Mammary epithelial cell (primary cell): ENCODE measurements at regions of chr19 and their contacts with region 1.

Region 1: DNA sequence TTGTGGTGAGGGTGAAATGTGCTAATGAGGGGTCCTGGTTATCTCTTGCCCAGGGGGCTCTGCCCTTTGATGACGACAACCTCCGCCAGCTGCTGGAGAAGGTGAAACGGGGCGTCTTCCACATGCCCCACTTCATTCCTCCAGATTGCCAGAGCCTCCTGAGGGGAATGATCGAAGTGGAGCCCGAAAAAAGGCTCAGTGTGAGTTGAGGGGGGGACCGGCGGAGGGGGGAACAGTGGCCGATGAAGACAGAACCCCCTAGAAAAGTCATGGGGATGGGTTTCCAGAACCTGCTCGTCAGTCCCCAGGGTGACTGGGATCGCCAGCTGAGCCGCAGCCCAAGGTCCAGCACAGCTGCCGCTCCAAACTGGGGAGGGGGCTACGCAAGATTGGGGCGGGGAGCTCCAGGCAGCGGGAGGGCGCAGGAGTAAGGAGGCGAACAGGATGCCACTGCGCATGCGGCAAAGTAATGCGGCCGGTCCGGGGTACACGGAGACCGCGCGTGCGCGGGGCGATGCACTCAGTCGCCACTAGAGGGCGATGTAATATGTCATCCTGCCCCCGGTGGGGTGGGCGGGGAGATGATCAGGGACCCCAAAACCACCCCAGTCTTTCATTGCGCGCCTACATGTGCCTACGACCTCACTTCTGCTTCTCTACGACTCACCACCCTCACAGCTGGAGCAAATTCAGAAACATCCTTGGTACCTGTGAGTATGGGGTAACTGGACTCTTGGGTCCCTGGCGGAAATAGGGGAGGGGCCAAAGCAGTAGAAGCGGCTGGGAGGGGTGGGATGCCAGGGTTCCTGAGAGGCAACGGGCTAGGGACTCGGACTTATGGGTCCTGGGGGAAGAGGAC is 17.9 kb downstream of the BRSK1 start:
- DNase-seq: peak; percentile 52
- H3K4me3 ChIP-seq: peak overlapping the region; percentile 17 to 50 (median 29)
- H3K27ac ChIP-seq: no peak overlapping the region
- H3K4me1 ChIP-seq: no peaks in the 10 kb centered on the region
- H3K27me3 ChIP-seq: no peaks in the 10 kb centered on the region
- CTCF ChIP-seq: peak; percentile 73 to 94

Region 2: GRCh38 chr19:55223291-55224037 is 78.2 kb before region 1 on chr19:
- CTCF ChIA-PET with region 1: no interaction called
- dilution Hi-C with region 1: loop called (anchors 5 kb)
- in situ Hi-C with region 1: no loop called
- intact Hi-C with region 1: no loop called
- DNase-seq: no peak
- H3K4me3 ChIP-seq: no peak overlapping the region
- H3K27ac ChIP-seq: no peak overlapping the region
- H3K4me1 ChIP-seq: no peaks in the 10 kb centered on the region
- H3K27me3 ChIP-seq: no peaks in the 10 kb centered on the region
- CTCF ChIP-seq: no peak

Region 3: DNA sequence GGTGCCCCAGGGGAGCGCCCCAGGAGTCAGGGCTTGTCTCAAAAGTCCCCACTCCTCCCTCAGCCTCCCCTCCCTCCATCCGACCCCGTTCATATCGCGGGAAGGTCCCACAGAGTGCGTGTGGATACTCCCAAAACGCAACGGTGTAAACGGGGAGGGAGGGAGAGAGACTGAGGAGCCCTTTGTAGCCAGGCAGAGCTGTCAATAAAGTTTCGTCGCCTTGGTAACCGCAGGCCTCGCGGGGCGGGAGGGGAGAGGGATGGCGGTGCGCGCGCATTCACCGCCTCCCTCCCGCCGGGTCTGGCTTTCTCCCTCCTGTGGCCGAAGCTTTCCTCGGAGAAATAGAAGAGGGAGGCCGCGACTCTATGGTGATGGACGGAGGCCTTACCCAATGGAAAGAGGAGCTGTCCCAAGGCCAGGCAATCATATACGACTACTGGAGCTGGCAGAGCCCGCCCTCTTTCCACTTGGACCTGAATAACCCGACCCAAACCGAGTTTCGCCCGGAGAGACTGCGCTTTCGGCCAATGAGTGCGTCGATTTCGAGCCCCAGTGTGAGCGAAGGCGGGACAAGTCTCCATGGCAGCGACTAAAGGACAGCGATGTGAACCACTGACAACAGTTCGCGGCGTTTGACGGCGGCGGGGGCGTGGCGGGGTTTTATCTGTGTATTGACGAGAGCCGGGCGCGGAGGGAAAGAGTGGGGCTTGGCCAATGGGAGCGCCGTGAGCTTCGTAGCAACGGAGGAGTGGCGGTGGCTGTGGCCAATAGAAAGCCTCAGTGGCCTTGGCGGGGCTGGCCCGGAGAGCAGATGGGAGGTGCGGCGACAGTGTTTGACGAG is 37.6 kb after region 1 on chr19 and contains the start of gene KMT5C:
- CTCF ChIA-PET with region 1: interaction called, 9 read pairs
- dilution Hi-C with region 1: no loop called
- in situ Hi-C with region 1: no loop called
- intact Hi-C with region 1: loop called (anchors 2 kb)
- DNase-seq: peak; percentile 100
- H3K4me3 ChIP-seq: peak within 1 kb of the TSS; percentile 48 to 83 (median 61)
- H3K27ac ChIP-seq: peak within 1 kb of the TSS; percentile 99
- H3K4me1 ChIP-seq: peaks cover 48% of the 10 kb centered on the region
- H3K27me3 ChIP-seq: no peaks in the 10 kb centered on the region
- CTCF ChIP-seq: peak in 1 of 2 donors; percentile 46
- total RNA-seq, gene KMT5C: 15.6 to 18.8 TPM

Region 4: DNA sequence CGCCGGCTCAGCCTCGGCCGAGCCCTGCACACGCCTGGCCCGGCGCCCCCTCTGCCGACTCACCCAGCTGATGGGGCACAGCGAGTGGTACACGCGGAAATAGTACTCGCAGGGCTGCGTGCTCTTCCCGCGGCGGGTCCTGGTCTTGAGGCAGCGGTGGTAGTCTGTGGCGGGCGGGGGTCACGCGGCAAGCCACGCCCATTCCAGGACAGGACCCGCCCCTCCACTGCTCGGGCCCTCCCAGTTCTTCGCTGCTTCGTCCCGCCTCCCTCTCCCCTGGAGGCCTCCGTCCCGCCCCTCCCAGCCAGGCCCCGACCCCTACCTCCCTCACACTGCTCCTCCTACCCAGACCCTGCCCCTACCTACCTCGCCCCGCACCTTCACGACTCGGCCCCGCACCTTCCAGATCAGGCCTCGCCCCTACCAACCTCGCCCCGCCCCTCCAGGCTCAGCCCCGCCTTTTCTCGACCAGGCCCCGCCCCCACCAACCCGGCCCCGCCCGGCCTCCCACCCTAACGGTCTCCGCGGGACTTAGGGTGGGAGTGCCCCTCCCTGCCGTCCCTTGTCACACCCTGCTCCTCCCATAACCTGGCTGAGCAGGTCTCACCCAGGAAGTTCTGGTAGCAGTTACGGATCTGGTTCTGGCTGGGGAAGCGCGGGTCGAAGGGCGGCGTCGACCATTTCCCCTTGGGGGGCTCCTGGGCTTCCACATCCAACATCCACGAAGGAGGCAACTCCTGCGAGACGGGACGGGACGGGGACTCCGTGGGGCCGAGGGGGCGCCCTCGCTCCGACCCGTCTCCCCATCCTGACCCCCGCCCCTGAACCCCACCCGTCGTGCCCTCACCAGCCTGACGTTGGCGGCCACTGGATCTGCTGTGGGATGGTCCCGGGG is 52.4 kb after region 1 on chr19:
- CTCF ChIA-PET with region 1: no interaction called
- dilution Hi-C with region 1: loop called (anchors 5 kb)
- in situ Hi-C with region 1: no loop called
- intact Hi-C with region 1: no loop called
- DNase-seq: peak; percentile 60
- H3K4me3 ChIP-seq: peak overlapping the region; percentile 47 to 59 (median 48)
- H3K27ac ChIP-seq: no peak overlapping the region
- H3K4me1 ChIP-seq: peaks cover 30% of the 10 kb centered on the region
- H3K27me3 ChIP-seq: no peaks in the 10 kb centered on the region
- CTCF ChIP-seq: no peak

Region 5: DNA sequence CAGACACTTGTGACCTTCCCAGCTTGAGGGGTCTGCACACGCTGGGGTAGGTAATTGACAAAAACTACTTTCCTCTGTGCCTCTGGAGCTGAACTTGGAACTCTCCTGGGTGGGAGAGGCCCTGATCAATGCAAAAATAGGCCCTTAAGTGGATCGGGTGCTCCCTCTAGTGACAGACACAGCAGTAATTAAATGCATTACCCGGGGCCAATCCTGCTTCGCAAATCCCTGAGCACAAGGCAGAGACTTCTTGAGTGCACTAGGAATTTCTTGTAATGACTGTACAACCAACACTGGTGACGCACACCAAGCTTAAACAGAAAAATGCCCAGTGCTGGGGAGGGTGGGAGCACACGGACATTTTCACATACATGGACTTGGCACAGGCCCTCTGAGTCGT is 116.5 kb after region 1 on chr19:
- CTCF ChIA-PET with region 1: no interaction called
- dilution Hi-C with region 1: loop called (anchors 10 kb)
- in situ Hi-C with region 1: no loop called
- intact Hi-C with region 1: loop called (anchors 1 kb)
- DNase-seq: peak; percentile 69
- H3K4me3 ChIP-seq: no peak overlapping the region
- H3K27ac ChIP-seq: no peak overlapping the region
- H3K4me1 ChIP-seq: no peaks in the 10 kb centered on the region
- H3K27me3 ChIP-seq: peaks cover 3% of the 10 kb centered on the region
- CTCF ChIP-seq: peak; percentile 75 to 77

Region 6: GRCh38 chr19:55494172-55494761 is 192.6 kb after region 1 on chr19:
- CTCF ChIA-PET with region 1: no interaction called
- dilution Hi-C with region 1: loop called (anchors 10 kb)
- in situ Hi-C with region 1: no loop called
- intact Hi-C with region 1: no loop called
- DNase-seq: no peak
- H3K4me3 ChIP-seq: no peak overlapping the region
- H3K27ac ChIP-seq: no peak overlapping the region
- H3K4me1 ChIP-seq: no peaks in the 10 kb centered on the region
- H3K27me3 ChIP-seq: peaks cover 4% of the 10 kb centered on the region
- CTCF ChIP-seq: no peak